Ascending aorta (tissue), 2 donors: ENCODE measurements at regions of chr11 and their contacts with region 1.

Region 1: DNA sequence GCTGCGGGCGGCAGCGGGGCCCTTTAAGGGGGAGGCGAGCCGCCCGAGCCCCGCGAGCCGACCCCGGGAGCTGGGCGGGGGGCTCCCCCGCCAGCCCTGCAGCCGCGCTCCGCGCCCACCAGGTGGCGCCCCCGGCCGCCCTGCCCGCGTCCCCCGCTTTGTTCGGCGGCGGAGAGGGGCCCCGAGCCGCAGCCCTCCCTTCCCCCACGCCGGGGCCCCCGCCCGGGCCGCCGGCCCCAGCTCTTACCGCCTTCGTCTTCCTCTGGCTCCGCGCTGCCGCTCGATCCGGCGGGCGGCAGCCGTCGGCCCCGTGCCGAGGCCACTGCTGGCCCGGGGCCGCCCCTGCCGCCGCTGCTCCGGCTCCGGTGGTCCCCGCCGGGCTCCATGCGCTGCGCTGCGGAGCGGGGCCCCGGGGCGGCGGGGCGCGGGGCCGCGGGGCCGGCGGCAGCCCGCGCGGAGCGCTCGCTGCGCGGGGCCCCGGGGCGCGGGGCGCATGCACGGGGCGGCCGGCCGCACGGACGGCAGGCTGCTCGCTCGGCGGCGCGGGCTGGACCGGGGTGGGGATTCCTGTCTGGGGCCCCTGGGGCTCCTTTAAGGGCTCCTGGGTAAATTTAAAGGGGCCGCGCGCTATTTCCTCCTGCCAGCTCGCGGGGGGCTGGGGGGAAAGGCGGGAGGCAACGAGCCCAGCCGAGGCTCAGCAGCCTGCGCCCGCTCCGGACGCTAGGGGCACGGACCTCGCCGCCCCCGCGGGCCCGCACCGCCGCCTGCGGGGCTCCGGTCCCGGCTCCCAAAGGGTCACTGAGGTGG is at the start of gene ZFTA:
- DNase-seq: peak in 1 of 2 donors; percentile 80
- H3K4me3 ChIP-seq: peak within 1 kb of the TSS; percentile 96 to 98
- H3K27ac ChIP-seq: peak within 1 kb of the TSS; percentile 73 to 89
- H3K4me1 ChIP-seq: peaks cover 6 to 7% of the 10 kb centered on the region in 2 donors
- H3K27me3 ChIP-seq: no peaks in the 10 kb centered on the region
- CTCF ChIP-seq: peak in 2 of 3 experiments; percentile 8 to 94
- total RNA-seq, gene ZFTA: 34.7 TPM

Region 2: DNA sequence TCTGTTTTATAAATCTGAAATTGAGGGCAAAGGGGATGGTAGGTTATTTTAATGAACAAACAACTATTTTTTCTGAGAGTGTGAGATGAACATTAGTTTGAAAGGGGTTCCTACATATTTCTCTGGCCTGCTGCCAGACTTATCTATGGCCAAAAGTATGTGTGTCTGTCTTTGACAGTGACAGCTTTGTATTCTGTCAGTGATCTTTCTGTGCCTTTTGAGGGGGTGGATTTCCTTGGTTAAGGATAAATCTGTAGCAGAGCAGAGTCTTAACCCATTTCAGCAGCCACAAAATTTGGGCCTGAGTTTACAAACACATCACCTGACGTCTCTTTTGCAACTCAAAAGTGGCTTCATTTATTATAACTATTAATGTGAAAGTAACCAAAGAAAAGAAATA is 30.7 kb before region 1 on chr11:
- intact Hi-C with region 1: no loop called
- DNase-seq: no peak
- H3K4me3 ChIP-seq: no peak overlapping the region
- H3K27ac ChIP-seq: no peak overlapping the region
- H3K4me1 ChIP-seq: no peaks in the 10 kb centered on the region
- H3K27me3 ChIP-seq: no peaks in the 10 kb centered on the region
- CTCF ChIP-seq: no peak

Region 3: DNA sequence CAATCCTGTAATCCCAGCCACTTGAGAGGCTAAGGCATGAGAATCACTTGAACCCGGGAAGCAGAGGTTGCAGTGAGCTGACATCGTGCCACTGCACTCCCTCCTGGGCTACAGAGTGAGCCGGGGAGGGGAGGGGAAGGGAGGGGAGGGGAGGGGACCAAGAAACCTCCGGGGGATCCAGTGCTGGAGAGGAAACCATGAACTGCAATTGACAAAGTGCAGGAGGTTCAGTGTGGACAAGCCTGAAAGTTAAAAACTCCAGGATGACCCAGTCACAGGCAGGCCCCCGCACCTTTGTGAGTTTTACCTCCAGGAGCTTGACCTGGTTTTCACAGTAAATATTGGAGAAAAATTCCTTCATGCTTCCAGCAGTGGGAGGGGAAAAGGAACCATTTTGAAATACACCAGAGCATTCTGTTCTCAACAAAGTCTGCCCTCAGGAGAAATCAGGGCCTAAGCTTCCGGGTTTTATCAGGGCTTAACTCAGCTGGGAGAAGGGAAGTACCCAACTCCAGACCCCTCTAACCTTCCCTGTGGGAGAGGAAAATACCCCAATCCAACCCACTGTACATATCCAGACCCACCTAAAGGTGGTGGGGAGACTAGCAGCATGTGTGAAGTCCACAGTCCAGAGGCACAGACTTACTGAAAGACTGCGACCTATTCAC is 15.6 kb after region 1 on chr11:
- intact Hi-C with region 1: no loop called
- DNase-seq: no peak
- H3K4me3 ChIP-seq: no peak overlapping the region
- H3K27ac ChIP-seq: no peak overlapping the region
- H3K4me1 ChIP-seq: no peaks in the 10 kb centered on the region
- H3K27me3 ChIP-seq: no peaks in the 10 kb centered on the region
- CTCF ChIP-seq: no peak

Region 4: GRCh38 chr11:63813035-63813562 is 44.7 kb after region 1 on chr11 and contains the start of gene SPINDOC:
- intact Hi-C with region 1: loop called (anchors 1 kb)
- DNase-seq: peak; percentile 28 to 88
- H3K4me3 ChIP-seq: peak within 1 kb of the TSS; percentile 95
- H3K27ac ChIP-seq: peak within 1 kb of the TSS; percentile 71 to 80
- H3K4me1 ChIP-seq: peaks cover 3 to 15% of the 10 kb centered on the region in 2 donors
- H3K27me3 ChIP-seq: no peaks in the 10 kb centered on the region
- CTCF ChIP-seq: no peak
- total RNA-seq, gene SPINDOC: 5.0 TPM

Region 5: DNA sequence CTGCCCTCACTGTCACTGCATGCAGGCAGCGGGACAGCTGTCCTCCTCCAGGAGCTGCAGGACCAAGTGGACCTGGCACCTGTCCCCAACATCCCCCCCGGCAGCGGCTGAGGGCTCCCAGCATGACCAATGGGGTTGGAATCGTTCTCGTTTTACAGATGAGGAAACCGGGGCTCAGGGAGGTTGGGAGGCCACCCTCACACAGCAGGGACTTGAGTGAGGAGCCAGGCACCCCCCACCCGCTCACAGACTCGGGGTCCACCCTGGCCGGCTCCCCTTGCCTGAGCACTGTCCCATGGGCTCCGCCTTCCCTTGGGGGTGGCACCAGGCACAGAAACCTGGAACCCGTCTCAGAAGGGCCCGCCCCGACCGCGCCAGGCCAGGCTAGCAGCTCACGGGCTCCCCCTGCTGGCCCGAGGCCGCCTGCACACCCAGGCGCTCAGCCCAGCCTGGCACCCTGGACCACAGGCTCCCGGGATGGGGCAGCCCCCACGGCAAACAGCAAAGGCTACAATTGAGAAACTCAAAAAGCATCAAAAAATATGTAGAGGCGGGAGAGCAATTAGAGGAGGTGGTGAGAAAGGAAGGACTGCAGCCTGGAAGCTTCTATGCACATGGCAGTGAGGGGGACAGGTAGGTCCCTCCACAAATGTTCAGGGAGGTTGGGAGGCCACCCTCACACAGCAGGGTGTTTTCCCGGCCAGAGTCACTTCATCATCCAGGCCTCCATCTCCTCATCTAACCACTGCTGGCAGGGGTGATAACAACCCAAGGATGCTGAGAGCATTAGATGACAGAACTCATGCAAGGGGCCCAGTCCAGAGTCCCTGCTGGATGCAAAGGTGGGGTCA is 384.6 kb after region 1 on chr11:
- intact Hi-C with region 1: loop called (anchors 5 kb)
- DNase-seq: peak in 1 of 2 donors; percentile 75
- H3K4me3 ChIP-seq: no peak overlapping the region
- H3K27ac ChIP-seq: no peak overlapping the region
- H3K4me1 ChIP-seq: peaks cover 0 to 3% of the 10 kb centered on the region in 2 donors
- H3K27me3 ChIP-seq: no peaks in the 10 kb centered on the region
- CTCF ChIP-seq: peak; percentile 87 to 100 (median 100)